HEK293T (cell line): ENCODE measurements at regions of chr17 and their contacts with region 1.

Region 1: DNA sequence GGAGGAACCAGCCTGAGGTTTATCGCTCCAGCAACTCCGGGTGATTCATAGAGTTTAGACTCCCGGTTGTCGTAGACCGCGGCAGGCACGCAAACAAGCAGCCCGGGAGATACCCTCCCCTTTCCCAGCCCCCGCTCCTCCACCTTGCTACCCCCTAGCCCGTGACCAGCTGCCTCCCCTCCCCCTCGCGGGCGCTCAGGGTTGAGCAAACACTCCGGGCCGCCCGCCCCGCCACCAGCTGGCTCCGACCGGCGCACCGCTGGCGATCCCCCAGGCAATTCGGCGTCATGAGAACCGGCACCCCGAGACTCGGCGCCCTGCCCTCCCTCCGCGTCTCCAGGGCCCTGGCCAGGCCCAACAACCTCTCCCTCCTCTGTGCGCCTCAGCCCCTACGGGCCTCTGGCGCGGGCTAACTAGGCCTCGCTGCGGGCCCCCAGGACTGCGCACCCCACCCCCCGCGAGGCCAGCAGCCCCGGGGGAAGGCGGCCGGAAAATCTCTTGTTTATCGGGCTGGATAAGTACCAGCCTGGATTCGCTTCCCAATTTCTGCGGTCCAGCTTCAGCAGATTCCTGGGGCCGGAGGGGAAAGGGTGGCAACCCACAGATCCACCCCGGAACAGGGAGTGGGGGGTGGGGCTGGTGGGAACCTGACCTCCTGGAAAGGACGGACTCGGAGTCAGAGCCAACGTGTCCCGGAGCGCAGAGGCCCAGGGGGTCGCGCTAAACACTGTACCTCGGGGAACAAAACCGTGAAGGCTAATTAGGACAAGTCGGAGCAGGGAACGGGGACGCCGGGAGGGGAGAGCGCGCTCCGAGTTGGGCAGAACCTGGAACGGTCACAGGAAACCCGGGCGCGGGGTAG is 951 bp upstream of the GPRC5C start:
- DNase-seq: peak; percentile 63

Region 2: GRCh38 chr17:74385201-74385600 is 45.7 kb before region 1 on chr17:
- CTCF ChIA-PET with region 1: no interaction called
- POLR2A ChIA-PET with region 1: no interaction called
- DNase-seq: no peak

Region 3: GRCh38 chr17:74417178-74418045 is 13.5 kb before region 1 on chr17:
- CTCF ChIA-PET with region 1: no interaction called
- POLR2A ChIA-PET with region 1: interaction called, 19 read pairs
- DNase-seq: no peak

Region 4: GRCh38 chr17:74467221-74467951 is 36.4 kb after region 1 on chr17:
- CTCF ChIA-PET with region 1: no interaction called
- POLR2A ChIA-PET with region 1: no interaction called
- DNase-seq: no peak